GM12878 (cell line): ENCODE measurements at regions of chr5 and their contacts with region 1.

Region 1: GRCh38 chr5:62460578-62460983 is 48.0 kb downstream of the IPO11 start:
- DNase-seq: no peak
- ATAC-seq: peak; percentile 90
- H3K4me3 ChIP-seq: no peak overlapping the region
- H3K27ac ChIP-seq: no peak overlapping the region
- H3K4me1 ChIP-seq: no peaks in the 10 kb centered on the region
- H3K27me3 ChIP-seq: no peaks in the 10 kb centered on the region
- CTCF ChIP-seq: peak; percentile 69 to 71 (median 71)
- EP300 ChIP-seq: no peak
- POLR2A ChIP-seq: no peak
- RAD21 ChIP-seq: peak; percentile 83

Region 2: GRCh38 chr5:62256161-62257019 is 204.2 kb before region 1 on chr5:
- CTCF ChIA-PET with region 1: no interaction called
- POLR2A ChIA-PET with region 1: no interaction called
- RAD21 ChIA-PET with region 1: no interaction called
- SMC1A ChIA-PET with region 1: no interaction called
- in situ Hi-C with region 1: no loop called
- intact Hi-C with region 1: no loop called
- DNase-seq: no peak
- ATAC-seq: peak; percentile 81
- H3K4me3 ChIP-seq: peak overlapping the region; percentile 8; the same call in 1 of the 2 replicates
- H3K27ac ChIP-seq: peak overlapping the region; percentile 56
- H3K4me1 ChIP-seq: 0 out of 2 replicates have a peak, but pooled peaks cover 3% of the 10 kb centered on the region
- H3K27me3 ChIP-seq: no peaks in the 10 kb centered on the region
- CTCF ChIP-seq: no peak
- EP300 ChIP-seq: no peak
- POLR2A ChIP-seq: no peak
- RAD21 ChIP-seq: no peak

Region 3: GRCh38 chr5:62450259-62450658 is 10.3 kb before region 1 on chr5:
- CTCF ChIA-PET with region 1: interaction called, 18 read pairs
- POLR2A ChIA-PET with region 1: no interaction called
- RAD21 ChIA-PET with region 1: no interaction called
- SMC1A ChIA-PET with region 1: interaction called, 9 read pairs
- in situ Hi-C with region 1: no loop called
- intact Hi-C with region 1: no loop called
- DNase-seq: no peak
- ATAC-seq: no peak
- H3K4me3 ChIP-seq: no peak overlapping the region
- H3K27ac ChIP-seq: no peak overlapping the region
- H3K4me1 ChIP-seq: no peaks in the 10 kb centered on the region
- H3K27me3 ChIP-seq: no peaks in the 10 kb centered on the region
- CTCF ChIP-seq: no peak
- EP300 ChIP-seq: no peak
- POLR2A ChIP-seq: no peak
- RAD21 ChIP-seq: no peak

Region 4: GRCh38 chr5:62494772-62495171 is 34.2 kb after region 1 on chr5:
- CTCF ChIA-PET with region 1: interaction called, 10 read pairs
- POLR2A ChIA-PET with region 1: interaction called, 3 read pairs
- RAD21 ChIA-PET with region 1: interaction called, 4 read pairs
- SMC1A ChIA-PET with region 1: interaction called, 3 read pairs
- in situ Hi-C with region 1: no loop called
- intact Hi-C with region 1: no loop called
- DNase-seq: no peak
- ATAC-seq: no peak
- H3K4me3 ChIP-seq: no peak overlapping the region
- H3K27ac ChIP-seq: peak overlapping the region; percentile 12; the same call in 1 of the 2 replicates
- H3K4me1 ChIP-seq: no peaks in the 10 kb centered on the region
- H3K27me3 ChIP-seq: no peaks in the 10 kb centered on the region
- CTCF ChIP-seq: no peak
- EP300 ChIP-seq: no peak
- POLR2A ChIP-seq: no peak
- RAD21 ChIP-seq: no peak

Region 5: DNA sequence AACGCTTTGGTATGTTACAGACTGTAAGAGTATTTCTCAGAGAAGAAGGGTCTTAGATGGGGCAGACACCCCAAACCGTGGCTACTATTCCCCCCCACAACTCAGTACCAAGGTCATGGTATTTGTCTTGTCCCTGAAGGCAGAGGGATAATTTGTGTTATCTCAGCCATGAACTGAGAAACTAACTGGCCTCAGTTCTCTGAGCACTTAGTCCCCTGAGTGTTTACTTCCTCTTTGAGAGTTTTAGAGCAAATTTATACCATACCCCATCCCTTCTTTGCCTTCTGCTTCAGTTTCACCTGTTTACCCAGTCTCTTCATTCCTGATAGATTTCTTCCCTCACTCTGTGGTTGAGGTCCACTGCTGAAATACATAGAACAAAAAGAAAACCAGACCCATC is 301.9 kb after region 1 on chr5:
- CTCF ChIA-PET with region 1: no interaction called
- POLR2A ChIA-PET with region 1: no interaction called
- RAD21 ChIA-PET with region 1: no interaction called
- SMC1A ChIA-PET with region 1: interaction called, 10 read pairs
- in situ Hi-C with region 1: no loop called
- intact Hi-C with region 1: no loop called
- DNase-seq: no peak
- ATAC-seq: peak; percentile 90
- H3K4me3 ChIP-seq: no peak overlapping the region
- H3K27ac ChIP-seq: no peak overlapping the region
- H3K4me1 ChIP-seq: no peaks in the 10 kb centered on the region
- H3K27me3 ChIP-seq: no peaks in the 10 kb centered on the region
- CTCF ChIP-seq: no peak
- EP300 ChIP-seq: no peak
- POLR2A ChIP-seq: no peak
- RAD21 ChIP-seq: no peak

Region 6: DNA sequence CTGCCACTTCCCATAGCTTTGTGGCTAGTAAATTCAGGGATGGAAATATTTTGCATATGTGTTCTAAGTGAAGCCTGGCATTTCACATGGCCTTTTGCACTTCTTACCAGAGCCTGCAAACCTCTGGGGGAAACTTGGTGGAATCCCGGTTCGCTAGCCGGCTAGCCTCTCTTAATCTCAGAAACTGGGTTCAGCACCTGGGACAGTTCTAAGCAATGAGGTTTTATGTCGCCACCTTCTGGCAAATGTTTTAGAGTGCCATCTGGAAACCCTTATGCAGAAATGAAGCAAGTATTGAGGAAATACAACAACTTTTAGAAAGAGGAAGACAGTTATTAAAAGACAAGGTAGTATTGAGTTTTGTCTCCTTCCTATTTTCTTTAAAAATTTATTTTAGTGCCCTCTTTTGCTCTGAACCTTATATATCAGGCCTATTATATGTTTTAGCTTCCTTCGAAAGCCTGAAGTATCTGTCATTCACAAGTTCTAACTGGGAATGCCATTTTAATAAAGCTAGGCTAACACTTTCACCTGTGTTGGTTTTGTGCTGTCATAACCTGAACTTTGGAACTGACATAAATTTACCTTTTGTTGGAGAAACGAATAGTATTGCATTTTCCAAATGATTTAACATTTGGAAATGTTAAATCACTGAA is 1502.6 kb after region 1 on chr5:
- CTCF ChIA-PET with region 1: no interaction called
- POLR2A ChIA-PET with region 1: no interaction called
- RAD21 ChIA-PET with region 1: no interaction called
- SMC1A ChIA-PET with region 1: interaction called, 3 read pairs
- in situ Hi-C with region 1: loop called (anchors 25 kb)
- intact Hi-C with region 1: no loop called
- DNase-seq: peak; percentile 1
- ATAC-seq: peak; percentile 92
- H3K4me3 ChIP-seq: no peak overlapping the region
- H3K27ac ChIP-seq: no peak overlapping the region
- H3K4me1 ChIP-seq: no peaks in the 10 kb centered on the region
- H3K27me3 ChIP-seq: no peaks in the 10 kb centered on the region; a peak in 1 of 4 replicates
- CTCF ChIP-seq: peak; percentile 66 to 78 (median 69)
- EP300 ChIP-seq: 0 out of 4 replicates have a peak, but pooled peaks of 1 of the 2 experiments have one; percentile 16
- POLR2A ChIP-seq: no peak
- RAD21 ChIP-seq: peak; percentile 77